ENCODE measurements at regions of chr6 and their contacts with region 1.

Region 1: GRCh38 chr6:70686548-70687133 is 19.0 kb downstream of the SMAP1 start:
- DNase-seq: peak in 4 of 14 experiments; percentile 26 to 69 (median 60)
- ATAC-seq: peak; percentile 64
- H3K4me3 ChIP-seq: no peak overlapping the region
- H3K4me3 Mint-ChIP-seq: no peak overlapping the region
- H3K27ac ChIP-seq: no peak overlapping the region
- H3K27ac Mint-ChIP-seq: no peak overlapping the region
- H3K4me1 ChIP-seq: peaks cover 5% of the 10 kb centered on the region
- H3K4me1 Mint-ChIP-seq: peaks cover 67% of the 10 kb centered on the region
- H3K27me3 ChIP-seq: no peaks in the 10 kb centered on the region
- H3K27me3 Mint-ChIP-seq: no peaks in the 10 kb centered on the region
- CTCF ChIP-seq: peak; percentile 83

Region 2: GRCh38 chr6:69487688-69488087 is 1199.0 kb before region 1 on chr6:
- CTCF ChIA-PET with region 1: no interaction called
- POLR2A ChIA-PET with region 1: no interaction called
- intact Hi-C with region 1: no loop called
- DNase-seq: no peak
- ATAC-seq: no peak
- H3K4me3 ChIP-seq: no peak overlapping the region
- H3K4me3 Mint-ChIP-seq: no peak overlapping the region
- H3K27ac ChIP-seq: no peak overlapping the region
- H3K27ac Mint-ChIP-seq: no peak overlapping the region
- H3K4me1 ChIP-seq: no peaks in the 10 kb centered on the region
- H3K4me1 Mint-ChIP-seq: no peaks in the 10 kb centered on the region
- H3K27me3 ChIP-seq: no peaks in the 10 kb centered on the region
- H3K27me3 Mint-ChIP-seq: no peaks in the 10 kb centered on the region
- CTCF ChIP-seq: no peak

Region 3: GRCh38 chr6:70310063-70310694 is 376.5 kb before region 1 on chr6:
- CTCF ChIA-PET with region 1: interaction called, 3 read pairs
- POLR2A ChIA-PET with region 1: no interaction called
- intact Hi-C with region 1: loop called (anchors 2 kb)
- DNase-seq: peak in 3 of 14 experiments; percentile 39 to 44 (median 40)
- ATAC-seq: no peak
- H3K4me3 ChIP-seq: no peak overlapping the region
- H3K4me3 Mint-ChIP-seq: no peak overlapping the region
- H3K27ac ChIP-seq: no peak overlapping the region
- H3K27ac Mint-ChIP-seq: no peak overlapping the region
- H3K4me1 ChIP-seq: no peaks in the 10 kb centered on the region
- H3K4me1 Mint-ChIP-seq: no peaks in the 10 kb centered on the region
- H3K27me3 ChIP-seq: peaks cover 0 to 6% of the 10 kb centered on the region in 2 experiments
- H3K27me3 Mint-ChIP-seq: peaks cover 39% of the 10 kb centered on the region
- CTCF ChIP-seq: peak; percentile 60

Region 4: DNA sequence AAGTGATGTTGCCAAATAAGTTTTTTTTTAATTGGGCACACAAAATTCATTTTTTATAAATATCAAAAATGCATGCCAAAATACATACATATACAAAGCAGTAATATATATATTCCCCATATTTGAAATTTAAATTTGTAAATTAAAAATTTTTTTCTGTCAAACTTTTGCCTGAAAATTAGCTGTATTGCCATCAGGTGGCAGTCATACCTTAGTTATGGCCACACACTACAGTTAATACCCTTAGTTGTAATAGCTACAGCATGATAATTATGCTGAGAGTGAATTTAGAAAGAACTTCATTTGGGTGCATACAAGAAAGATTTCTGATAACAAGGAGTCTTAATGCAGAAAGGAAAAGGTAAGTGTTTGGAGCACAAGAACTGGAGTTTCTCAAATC is 166.1 kb before region 1 on chr6:
- CTCF ChIA-PET with region 1: interaction called, 12 read pairs
- POLR2A ChIA-PET with region 1: interaction called, 4 read pairs
- intact Hi-C with region 1: loop called (anchors 1 to 2 kb)
- DNase-seq: peak in 4 of 14 experiments; percentile 14 to 51 (median 42)
- ATAC-seq: no peak
- H3K4me3 ChIP-seq: no peak overlapping the region
- H3K4me3 Mint-ChIP-seq: no peak overlapping the region
- H3K27ac ChIP-seq: no peak overlapping the region
- H3K27ac Mint-ChIP-seq: no peak overlapping the region
- H3K4me1 ChIP-seq: no peaks in the 10 kb centered on the region
- H3K4me1 Mint-ChIP-seq: peaks cover 7% of the 10 kb centered on the region
- H3K27me3 ChIP-seq: no peaks in the 10 kb centered on the region
- H3K27me3 Mint-ChIP-seq: no peaks in the 10 kb centered on the region
- CTCF ChIP-seq: peak; percentile 56

Region 5: DNA sequence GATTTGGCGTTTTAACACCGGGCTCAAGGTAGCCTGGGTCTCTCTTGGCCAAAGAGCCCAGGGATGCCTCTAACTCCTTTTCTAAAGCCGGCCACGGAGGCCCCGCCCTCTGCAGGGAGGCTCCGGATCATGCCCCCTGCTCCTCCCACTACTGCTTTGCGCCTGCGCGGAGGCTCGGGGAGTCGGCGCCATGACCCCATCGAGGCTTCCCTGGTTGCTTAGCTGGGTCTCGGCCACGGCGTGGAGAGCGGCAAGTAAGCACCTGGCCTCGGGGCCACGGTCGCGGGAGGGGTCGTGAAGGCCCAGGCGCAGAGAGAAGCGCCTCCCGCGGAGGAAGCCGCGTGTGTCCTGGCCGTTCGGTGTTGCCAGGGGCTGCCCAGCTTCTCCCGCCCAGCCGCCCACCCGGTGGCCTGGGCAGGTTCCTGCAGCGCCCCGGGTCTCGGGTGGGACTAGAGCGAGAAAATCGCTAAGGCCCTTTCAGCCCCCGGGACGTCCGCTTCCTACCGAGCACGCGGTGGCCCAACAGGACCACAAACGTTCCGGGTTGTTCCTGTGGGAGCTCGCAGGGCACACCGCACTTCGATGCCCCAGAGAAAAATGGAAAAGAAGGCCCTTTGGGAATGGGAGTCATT is 119.8 kb before region 1 on chr6 and contains the start of gene SDHAF4:
- CTCF ChIA-PET with region 1: interaction called, 6 read pairs
- POLR2A ChIA-PET with region 1: no interaction called
- intact Hi-C with region 1: loop called in 1 of 2 experiments (anchors 5 kb)
- DNase-seq: peak; percentile 90 to 96 (median 93)
- ATAC-seq: peak; percentile 99
- H3K4me3 ChIP-seq: peak within 1 kb of the TSS; percentile 95
- H3K4me3 Mint-ChIP-seq: peak within 1 kb of the TSS; percentile 87
- H3K27ac ChIP-seq: peak within 1 kb of the TSS; percentile 67 to 75
- H3K27ac Mint-ChIP-seq: peak within 1 kb of the TSS; percentile 79
- H3K4me1 ChIP-seq: peaks cover 18% of the 10 kb centered on the region
- H3K4me1 Mint-ChIP-seq: peaks cover 22% of the 10 kb centered on the region
- H3K27me3 ChIP-seq: no peaks in the 10 kb centered on the region
- H3K27me3 Mint-ChIP-seq: no peaks in the 10 kb centered on the region
- CTCF ChIP-seq: no peak
- total RNA-seq, gene SDHAF4: 2.2 to 2.6 TPM

Region 6: GRCh38 chr6:70667711-70668498 is 18.7 kb before region 1 on chr6 and contains the start of gene SMAP1:
- CTCF ChIA-PET with region 1: interaction called, 18 read pairs
- POLR2A ChIA-PET with region 1: interaction called, 6 read pairs
- intact Hi-C with region 1: loop called in 1 of 2 experiments (anchors 2 kb)
- DNase-seq: peak; percentile 80 to 96 (median 92)
- ATAC-seq: peak; percentile 87
- H3K4me3 ChIP-seq: peak within 1 kb of the TSS; percentile 75
- H3K4me3 Mint-ChIP-seq: peak within 1 kb of the TSS; percentile 90
- H3K27ac ChIP-seq: peak within 1 kb of the TSS; percentile 54 to 66
- H3K27ac Mint-ChIP-seq: peak within 1 kb of the TSS; percentile 88
- H3K4me1 ChIP-seq: peaks cover 26% of the 10 kb centered on the region
- H3K4me1 Mint-ChIP-seq: peaks cover 57% of the 10 kb centered on the region
- H3K27me3 ChIP-seq: no peaks in the 10 kb centered on the region
- H3K27me3 Mint-ChIP-seq: no peaks in the 10 kb centered on the region
- CTCF ChIP-seq: no peak
- total RNA-seq, gene SMAP1: 20.0 to 22.5 TPM